ENCODE measurements at regions of chr21 and their contacts with region 1.

Region 1: GRCh38 chr21:40120940-40121575 is 253.8 kb downstream of the PCP4 start:
- DNase-seq: no peak
- ATAC-seq: no peak
- H3K4me3 ChIP-seq: no peak overlapping the region
- H3K4me1 ChIP-seq: no peaks in the 10 kb centered on the region
- CTCF ChIP-seq: peak; percentile 31

Region 2: DNA sequence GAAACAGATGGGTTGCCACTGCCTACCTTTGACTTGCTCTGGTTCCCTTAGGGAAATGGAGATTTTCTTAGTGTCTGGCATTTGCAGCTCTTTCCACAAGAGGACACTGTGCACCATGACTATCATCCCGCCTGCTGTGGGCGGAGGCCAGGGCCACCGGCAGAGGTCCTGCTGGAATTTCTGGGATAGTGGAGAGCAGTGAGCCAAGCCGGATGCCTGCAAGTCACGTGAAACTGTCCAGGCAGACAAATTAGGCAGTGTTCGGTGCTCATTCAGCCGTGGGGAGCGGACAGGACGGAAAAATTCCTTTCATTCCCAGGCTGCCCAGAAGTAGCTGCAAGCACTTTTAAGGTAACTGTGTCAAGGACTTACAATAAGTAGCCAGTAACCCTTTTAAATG is 332.7 kb before region 1 on chr21:
- intact Hi-C with region 1: loop called in 1 of 2 experiments (anchors 10 kb)
- DNase-seq: peak; percentile 58 to 63 (median 61)
- ATAC-seq: peak; percentile 95
- H3K4me3 ChIP-seq: no peak overlapping the region
- H3K4me1 ChIP-seq: no peaks in the 10 kb centered on the region
- CTCF ChIP-seq: peak; percentile 44

Region 3: DNA sequence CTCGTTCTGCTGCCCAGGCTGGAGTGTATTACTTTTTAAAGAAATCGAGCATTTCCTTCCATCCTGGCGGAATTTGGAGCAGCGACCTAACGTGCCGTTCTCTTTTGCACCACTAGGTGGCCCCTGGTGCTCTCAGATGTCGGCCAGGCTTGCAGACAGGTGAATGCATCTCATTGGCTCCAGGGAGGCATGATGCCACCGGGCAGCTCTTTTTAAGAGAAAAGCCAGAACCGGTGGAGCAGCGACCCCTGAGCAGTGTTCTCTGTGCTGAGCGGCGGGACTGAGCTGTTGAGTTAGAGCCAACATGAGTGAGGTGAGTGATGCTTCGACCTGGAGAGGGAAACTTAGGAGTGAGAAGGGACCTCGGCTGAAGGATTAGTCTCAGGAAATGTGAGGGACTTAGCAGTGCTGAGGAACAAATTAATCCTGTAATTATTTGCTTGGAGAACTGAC is 253.8 kb before region 1 on chr21 and contains the start of gene PCP4:
- intact Hi-C with region 1: loop called in 1 of 2 experiments (anchors 5 kb)
- DNase-seq: peak in 2 of 3 donors; percentile 66 to 73
- ATAC-seq: peak; percentile 82
- H3K4me3 ChIP-seq: no peak within 1 kb of the TSS
- H3K4me1 ChIP-seq: no peaks in the 10 kb centered on the region
- CTCF ChIP-seq: peak; percentile 66
- total RNA-seq, gene PCP4: 1.4 to 23.6 (median 3.9) TPM

Measured in mucosa of descending colon (tissue), 3 donors.